ENCODE measurements at regions of chr7 and their contacts with region 1.

Region 1: DNA sequence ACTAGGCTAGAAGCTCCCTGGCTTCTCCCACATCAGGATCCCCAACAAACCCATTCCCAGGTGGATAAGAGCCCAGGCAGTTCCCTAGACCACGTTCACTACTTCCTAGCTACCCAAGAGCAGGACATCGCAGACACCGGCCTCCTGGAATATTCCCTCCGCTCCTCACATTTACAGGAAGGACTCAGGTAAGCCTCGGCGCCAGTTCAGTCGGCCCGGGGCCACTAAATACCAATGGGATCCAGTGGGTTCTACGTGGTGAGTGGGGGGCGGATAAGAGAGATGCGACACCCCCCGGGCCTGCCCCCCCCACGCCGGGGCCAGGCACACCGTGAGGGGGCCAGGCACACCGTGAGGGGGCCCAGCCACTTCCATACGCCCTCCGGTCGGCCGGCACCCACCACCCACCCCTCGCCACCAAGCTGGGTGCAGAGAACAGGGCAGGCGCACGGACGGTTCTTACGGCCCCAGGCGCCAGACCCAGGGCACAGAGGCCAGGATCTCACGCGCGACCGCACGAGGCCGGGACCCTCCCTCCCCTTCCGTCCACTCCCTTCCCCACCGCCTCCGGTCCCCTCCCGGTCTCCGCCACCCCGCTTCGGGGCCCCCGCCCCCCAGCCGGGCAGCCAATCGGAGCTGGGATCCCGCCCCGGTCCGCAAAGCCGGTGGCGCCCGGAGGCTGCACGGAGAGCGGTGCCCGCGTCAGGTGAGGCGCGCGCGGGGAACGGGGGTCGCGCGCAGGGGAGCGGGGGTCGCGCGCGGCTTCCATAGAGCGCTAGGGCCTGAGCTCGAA is at the start of gene BLVRA:
- DNase-seq: peak; percentile 49 to 82 (median 60)
- ATAC-seq: peak; percentile 78 to 87
- H3K4me3 Mint-ChIP-seq: peak within 1 kb of the TSS; percentile 61 to 94 (median 88)
- H3K27ac Mint-ChIP-seq: peak within 1 kb of the TSS; percentile 67 to 93 (median 88)
- H3K4me1 Mint-ChIP-seq: peaks cover 12 to 37% (median 32%) of the 10 kb centered on the region in 4 donors
- H3K27me3 Mint-ChIP-seq: peaks cover 0 to 4% (median 0%) of the 10 kb centered on the region in 5 donors
- polyA plus RNA-seq, gene BLVRA: 17.8 to 33.8 (median 20.2) TPM

Region 2: DNA sequence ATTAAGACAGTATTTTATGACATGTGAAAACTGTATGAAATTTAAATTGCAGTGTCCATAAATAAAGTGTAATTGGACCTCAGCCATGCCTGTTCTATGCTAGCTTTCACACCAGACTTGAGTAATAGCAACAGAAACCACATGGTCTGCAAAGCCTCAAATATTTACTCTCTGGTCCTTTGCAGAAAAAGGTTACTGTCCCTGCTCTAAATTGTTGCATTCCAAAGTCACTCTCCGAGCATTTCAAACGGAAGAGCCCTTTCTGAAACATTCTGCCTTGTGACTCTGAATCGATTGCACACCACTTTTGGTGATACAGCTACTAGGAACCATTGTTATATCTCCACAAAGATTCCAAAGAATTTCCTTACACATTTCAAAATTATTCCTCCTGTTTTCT is 256.4 kb before region 1 on chr7:
- POLR2A ChIA-PET with region 1: no interaction called
- DNase-seq: no peak
- ATAC-seq: no peak
- H3K4me3 Mint-ChIP-seq: no peak overlapping the region
- H3K27ac Mint-ChIP-seq: no peak overlapping the region
- H3K4me1 Mint-ChIP-seq: no peaks in the 10 kb centered on the region
- H3K27me3 Mint-ChIP-seq: peaks cover 0 to 14% (median 7%) of the 10 kb centered on the region in 5 donors

Region 3: DNA sequence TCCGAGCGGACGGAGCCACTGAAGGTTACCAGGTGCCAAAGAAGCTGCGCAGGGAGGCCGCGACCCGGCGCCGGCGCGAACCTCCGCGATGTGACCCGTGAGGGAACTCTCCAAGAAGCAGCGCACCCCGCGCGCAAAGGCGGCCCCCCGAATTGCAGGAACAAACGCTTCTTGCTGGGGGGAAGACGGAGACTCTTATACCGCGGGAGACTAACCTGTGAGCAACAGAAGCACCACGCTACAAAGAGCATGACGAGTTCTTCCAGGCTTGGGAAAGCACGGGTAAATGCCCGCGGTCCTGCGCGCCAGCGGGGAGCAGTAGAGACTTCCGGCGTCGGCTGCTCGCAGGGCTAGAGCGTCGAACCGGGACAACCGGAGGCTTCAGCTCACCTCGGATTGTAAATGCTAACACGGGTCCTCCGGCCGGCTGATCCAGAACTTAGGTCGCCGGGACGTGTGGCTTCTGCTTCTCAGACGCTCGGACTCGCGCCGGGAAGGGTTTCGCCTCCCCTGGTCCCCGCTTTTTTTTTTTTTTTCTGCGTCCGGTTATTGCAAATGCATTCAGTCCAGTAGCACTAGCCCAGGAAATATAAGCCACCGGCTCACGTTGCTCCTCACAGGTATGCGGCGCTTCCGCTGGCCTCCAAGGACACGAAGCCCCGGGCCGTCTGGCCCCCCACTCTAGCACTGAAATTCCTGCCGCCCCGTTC is 28.9 kb before region 1 on chr7 and contains the start of gene COA1:
- POLR2A ChIA-PET with region 1: interaction called, 12 read pairs
- DNase-seq: peak; percentile 63 to 84 (median 78)
- ATAC-seq: peak; percentile 93 to 94
- H3K4me3 Mint-ChIP-seq: peak within 1 kb of the TSS; percentile 90 to 97 (median 94)
- H3K27ac Mint-ChIP-seq: peak within 1 kb of the TSS; percentile 83 to 95 (median 92)
- H3K4me1 Mint-ChIP-seq: peaks cover 20 to 53% (median 38%) of the 10 kb centered on the region in 4 donors
- H3K27me3 Mint-ChIP-seq: peaks cover 0 to 2% (median 0%) of the 10 kb centered on the region in 5 donors
- polyA plus RNA-seq, gene COA1: 102 to 121 (median 104) TPM